ENCODE measurements at regions of chr1 and their contacts with region 1.

Region 1: GRCh38 chr1:201748335-201748734 is 80.6 kb upstream of the IPO9 start:
- DNase-seq: no peak
- ATAC-seq: peak in 5 of 8 donors; percentile 8 to 50 (median 37)
- H3K4me3 ChIP-seq: no peak overlapping the region
- H3K27ac ChIP-seq: peak overlapping the region in 8 of 10 donors; percentile 15 to 97 (median 55)
- H3K4me1 ChIP-seq: peaks cover 16 to 100% (median 91%) of the 10 kb centered on the region in 9 donors
- H3K27me3 ChIP-seq: no peaks in the 10 kb centered on the region
- CTCF ChIP-seq: no peak

Region 2: DNA sequence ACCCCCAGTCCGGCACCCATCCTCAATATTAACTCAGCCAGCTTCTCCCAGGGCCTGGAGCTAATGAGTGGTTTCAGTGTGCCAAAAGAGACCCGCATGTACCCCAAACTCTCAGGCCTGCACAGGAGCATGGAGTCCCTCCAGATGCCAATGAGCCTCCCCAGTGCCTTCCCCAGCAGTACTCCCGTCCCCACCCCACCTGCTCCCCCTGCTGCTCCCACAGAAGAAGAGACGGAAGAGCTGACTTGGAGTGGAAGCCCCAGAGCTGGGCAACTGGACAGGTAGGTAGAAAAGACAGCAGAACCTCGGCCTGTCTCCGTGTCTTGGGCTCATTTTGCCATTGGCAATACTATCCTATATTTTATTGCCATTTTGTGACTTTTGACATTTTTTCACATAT is 35.2 kb after region 1 on chr1:
- intact Hi-C with region 1: loop called in 2 of 10 experiments (anchors 5 kb)
- DNase-seq: no peak
- ATAC-seq: no peak
- H3K4me3 ChIP-seq: no peak overlapping the region
- H3K27ac ChIP-seq: peak overlapping the region in 2 of 10 donors; percentile 9 to 59
- H3K4me1 ChIP-seq: peaks cover 10 to 86% (median 50%) of the 10 kb centered on the region in 9 donors
- H3K27me3 ChIP-seq: no peaks in the 10 kb centered on the region
- CTCF ChIP-seq: peak in 2 of 9 donors; percentile 10 to 12

Region 3: DNA sequence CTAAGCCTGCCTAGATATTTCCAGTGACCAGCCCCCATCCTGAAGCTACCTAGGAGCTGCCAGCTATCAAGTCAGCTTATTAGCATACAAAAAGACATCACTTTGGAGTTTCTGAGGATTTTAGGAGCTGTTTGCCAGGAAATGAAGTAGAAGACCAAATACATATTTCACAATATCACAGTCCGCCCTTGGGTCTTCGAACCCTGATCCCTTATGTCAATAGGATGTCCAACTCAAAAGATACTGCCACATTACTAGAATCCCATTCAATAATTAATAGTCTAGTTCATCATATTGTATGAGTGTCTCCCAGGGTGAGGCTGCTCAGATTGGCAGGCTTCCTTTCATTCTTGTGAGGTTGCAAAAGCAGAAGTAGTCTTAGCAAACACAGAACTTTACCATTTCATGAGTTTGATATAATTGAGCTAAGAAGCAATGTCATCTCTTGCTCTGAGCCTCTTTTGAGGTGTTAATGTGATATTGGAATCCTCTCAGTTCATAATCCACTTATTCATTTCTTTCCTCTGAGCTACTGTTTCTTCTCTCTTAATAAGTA is 94.2 kb after region 1 on chr1:
- intact Hi-C with region 1: no loop called
- DNase-seq: no peak
- ATAC-seq: no peak
- H3K4me3 ChIP-seq: no peak overlapping the region
- H3K27ac ChIP-seq: no peak overlapping the region
- H3K4me1 ChIP-seq: peaks cover 0 to 29% (median 18%) of the 10 kb centered on the region in 9 donors
- H3K27me3 ChIP-seq: no peaks in the 10 kb centered on the region
- CTCF ChIP-seq: no peak

Region 4: GRCh38 chr1:202210385-202210784 is 462.1 kb after region 1 on chr1:
- intact Hi-C with region 1: no loop called
- DNase-seq: no peak
- ATAC-seq: no peak
- H3K4me3 ChIP-seq: no peak overlapping the region
- H3K27ac ChIP-seq: no peak overlapping the region
- H3K4me1 ChIP-seq: peaks cover 0 to 11% (median 4%) of the 10 kb centered on the region in 9 donors
- H3K27me3 ChIP-seq: peaks cover 10 to 61% (median 45%) of the 10 kb centered on the region in 7 donors
- CTCF ChIP-seq: no peak

Measured in heart right ventricle (tissue), 16 donors.